PC-9 (cell line): ENCODE measurements at regions of chr22 and their contacts with region 1.

Region 1: DNA sequence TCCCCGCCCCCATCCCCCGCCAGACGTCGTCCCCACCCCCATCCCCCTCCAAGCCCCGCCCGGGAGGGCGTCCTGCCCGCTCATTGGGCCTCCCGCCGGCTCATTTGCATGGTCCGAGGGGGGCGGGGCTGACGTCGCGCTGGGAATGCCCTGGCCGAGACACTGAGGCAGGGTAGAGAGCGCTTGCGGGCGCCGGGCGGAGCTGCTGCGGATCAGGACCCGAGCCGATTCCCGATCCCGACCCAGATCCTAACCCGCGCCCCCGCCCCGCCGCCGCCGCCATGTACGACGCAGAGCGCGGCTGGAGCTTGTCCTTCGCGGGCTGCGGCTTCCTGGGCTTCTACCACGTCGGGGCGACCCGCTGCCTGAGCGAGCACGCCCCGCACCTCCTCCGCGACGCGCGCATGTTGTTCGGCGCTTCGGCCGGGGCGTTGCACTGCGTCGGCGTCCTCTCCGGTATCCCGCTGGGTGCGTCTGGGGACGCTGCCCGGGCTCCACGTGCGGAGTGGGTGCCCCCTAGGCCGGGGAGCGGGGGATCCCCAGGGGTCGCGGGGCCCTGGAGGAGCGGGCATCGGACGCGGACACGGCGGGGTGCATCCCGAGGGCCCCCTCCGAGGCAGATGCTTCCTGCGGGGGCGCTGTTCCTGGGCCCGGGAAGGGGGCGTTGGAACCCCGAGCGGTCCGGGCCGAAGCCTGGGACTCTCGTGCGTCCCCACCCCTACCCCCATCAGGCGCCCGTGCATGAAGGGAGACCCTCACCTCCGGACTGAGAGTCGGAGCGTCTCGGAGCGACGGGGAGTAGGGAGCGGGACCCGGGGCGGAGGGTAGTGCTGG is at the start of gene PNPLA3:
- DNase-seq: peak; percentile 73 to 92
- H3K4me3 ChIP-seq: peak within 1 kb of the TSS; percentile 67
- H3K27ac ChIP-seq: peak within 1 kb of the TSS; percentile 24
- H3K4me1 ChIP-seq: peaks cover 47% of the 10 kb centered on the region
- H3K27me3 ChIP-seq: no peaks in the 10 kb centered on the region
- CTCF ChIP-seq: 0 out of 2 replicates have a peak, but pooled peaks have one; percentile 34
- total RNA-seq, gene PNPLA3: 22.2 and 26.8 TPM in 2 replicates

Region 2: DNA sequence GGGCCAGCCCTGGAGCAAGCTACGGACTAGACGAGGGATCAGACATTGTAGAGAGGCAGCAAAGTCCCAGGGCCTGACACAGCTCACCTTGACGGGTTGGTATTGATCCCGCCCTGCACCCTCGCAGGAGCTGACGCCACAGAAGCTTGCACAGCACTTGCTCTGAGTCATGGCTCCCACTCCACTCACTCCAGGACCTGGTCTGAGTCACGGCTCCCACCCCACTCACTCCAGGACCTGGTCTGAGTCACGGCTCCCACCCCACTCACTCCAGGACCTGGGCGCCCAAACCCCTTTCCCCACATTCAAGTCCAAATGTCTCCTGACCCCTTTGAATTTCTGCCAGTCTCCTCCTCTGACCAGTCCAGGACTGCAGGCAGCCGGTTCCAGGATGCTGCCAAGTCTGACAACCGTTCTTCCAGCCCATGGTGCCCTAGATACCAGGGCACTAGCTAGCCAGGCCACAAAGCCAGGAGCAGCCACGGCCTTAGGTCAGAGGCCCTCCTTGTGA is 26.0 kb before region 1 on chr22:
- CTCF ChIA-PET with region 1: interaction called, 3 read pairs
- POLR2A ChIA-PET with region 1: no interaction called
- intact Hi-C with region 1: loop called (anchors 2 kb)
- DNase-seq: peak; percentile 64 to 79
- H3K4me3 ChIP-seq: no peak overlapping the region
- H3K27ac ChIP-seq: peak overlapping the region; percentile 44
- H3K4me1 ChIP-seq: peaks cover 52% of the 10 kb centered on the region
- H3K27me3 ChIP-seq: no peaks in the 10 kb centered on the region
- CTCF ChIP-seq: no peak

Region 3: GRCh38 chr22:43955040-43955882 is 31.4 kb after region 1 on chr22 and contains the start of gene SAMM50:
- CTCF ChIA-PET with region 1: no interaction called
- POLR2A ChIA-PET with region 1: interaction called, 14 read pairs
- intact Hi-C with region 1: no loop called
- DNase-seq: peak; percentile 87 to 90
- H3K4me3 ChIP-seq: peak within 1 kb of the TSS; percentile 91
- H3K27ac ChIP-seq: peak within 1 kb of the TSS; percentile 65
- H3K4me1 ChIP-seq: peaks cover 25% of the 10 kb centered on the region
- H3K27me3 ChIP-seq: no peaks in the 10 kb centered on the region
- CTCF ChIP-seq: no peak
- total RNA-seq, gene SAMM50: 72.2 and 73.9 TPM in 2 replicates

Region 4: GRCh38 chr22:44796972-44797725 is 873.3 kb after region 1 on chr22:
- CTCF ChIA-PET with region 1: interaction called, 29 read pairs
- POLR2A ChIA-PET with region 1: no interaction called
- intact Hi-C with region 1: no loop called
- DNase-seq: no peak
- H3K4me3 ChIP-seq: no peak overlapping the region
- H3K27ac ChIP-seq: no peak overlapping the region
- H3K4me1 ChIP-seq: no peaks in the 10 kb centered on the region
- H3K27me3 ChIP-seq: no peaks in the 10 kb centered on the region
- CTCF ChIP-seq: no peak